Motor neuron (in vitro differentiated cells): ENCODE measurements at regions of chr6 and their contacts with region 1.

Region 1: DNA sequence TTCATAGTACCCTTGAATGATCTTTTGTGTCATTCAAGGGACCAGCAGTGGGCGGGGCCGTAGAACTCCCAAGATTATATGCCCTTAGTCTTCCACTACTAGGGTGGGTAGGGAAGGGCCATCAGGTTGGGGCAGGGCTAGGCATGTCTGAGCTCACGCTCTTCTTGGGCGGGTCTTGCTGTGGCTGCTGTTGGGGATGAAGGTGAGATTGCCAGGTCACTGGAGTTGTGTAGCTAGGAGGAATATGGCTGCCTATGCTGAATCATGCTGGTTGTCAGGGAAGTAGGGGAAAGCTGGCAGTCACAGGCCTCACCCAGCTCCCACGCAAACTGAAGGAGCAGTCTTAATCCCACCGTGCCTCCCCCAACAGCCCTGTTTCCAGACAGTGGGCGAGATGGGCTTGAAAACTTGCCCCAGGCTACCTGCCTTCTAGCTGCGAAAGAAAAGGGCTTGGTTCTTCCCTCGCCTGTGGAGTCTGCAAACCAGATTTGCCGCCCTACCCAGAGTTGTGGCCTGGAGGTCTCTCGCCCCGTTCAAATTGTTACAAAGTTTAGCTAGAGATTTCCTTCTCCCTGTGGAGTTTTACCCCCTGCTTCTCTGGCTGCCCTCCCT is 76.4 kb upstream of the ADGRF4 start:
- ATAC-seq: no peak
- H3K4me3 ChIP-seq: no peak overlapping the region
- H3K27ac ChIP-seq: no peak overlapping the region
- H3K4me1 ChIP-seq: no peaks in the 10 kb centered on the region

Region 2: GRCh38 chr6:47769982-47770381 is 148.0 kb after region 1 on chr6:
- in situ Hi-C with region 1: loop called in 1 of 9 experiments (anchors 10 kb)
- ATAC-seq: peak in 2 of 8 experiments; percentile 52 to 89
- H3K4me3 ChIP-seq: no peak overlapping the region
- H3K27ac ChIP-seq: no peak overlapping the region
- H3K4me1 ChIP-seq: peaks cover 0 to 10% of the 10 kb centered on the region in 2 donors

Region 3: GRCh38 chr6:47890326-47890875 is 268.5 kb after region 1 on chr6:
- in situ Hi-C with region 1: no loop called
- ATAC-seq: no peak
- H3K4me3 ChIP-seq: no peak overlapping the region
- H3K27ac ChIP-seq: no peak overlapping the region
- H3K4me1 ChIP-seq: no peaks in the 10 kb centered on the region

Region 4: GRCh38 chr6:47952640-47953039 is 330.7 kb after region 1 on chr6:
- in situ Hi-C with region 1: no loop called
- ATAC-seq: no peak
- H3K4me3 ChIP-seq: no peak overlapping the region
- H3K27ac ChIP-seq: no peak overlapping the region
- H3K4me1 ChIP-seq: peaks cover 5 to 11% of the 10 kb centered on the region in 2 donors